Activated CD4-positive, alpha-beta T cell treated with anti-CD3 and anti-CD28 coated beads for 36 hours (primary cell): ENCODE measurements at regions of chr9 and their contacts with region 1.

Region 1: GRCh38 chr9:133030317-133031129 is at the start of gene GTF3C5:
- DNase-seq: peak; percentile 95
- ATAC-seq: peak; percentile 98
- H3K4me3 Mint-ChIP-seq: peak within 1 kb of the TSS; percentile 94
- H3K27ac Mint-ChIP-seq: peak within 1 kb of the TSS; percentile 95
- H3K4me1 Mint-ChIP-seq: peaks cover 41% of the 10 kb centered on the region
- H3K27me3 Mint-ChIP-seq: no peaks in the 10 kb centered on the region
- total RNA-seq, gene GTF3C5: 81.3 to 84.5 TPM

Region 2: GRCh38 chr9:133041958-133042357 is 11.4 kb after region 1 on chr9:
- CTCF ChIA-PET with region 1: interaction called, 13 read pairs
- POLR2A ChIA-PET with region 1: interaction called, 4 read pairs
- intact Hi-C with region 1: no loop called
- DNase-seq: no peak
- ATAC-seq: no peak
- H3K4me3 Mint-ChIP-seq: no peak overlapping the region
- H3K27ac Mint-ChIP-seq: no peak overlapping the region
- H3K4me1 Mint-ChIP-seq: peaks cover 10% of the 10 kb centered on the region
- H3K27me3 Mint-ChIP-seq: no peaks in the 10 kb centered on the region

Region 3: GRCh38 chr9:133478851-133479711 is 448.6 kb after region 1 on chr9 and contains the start of gene SLC2A6:
- CTCF ChIA-PET with region 1: no interaction called
- POLR2A ChIA-PET with region 1: no interaction called
- intact Hi-C with region 1: loop called in 1 of 2 experiments (anchors 2 kb)
- DNase-seq: peak; percentile 89
- ATAC-seq: peak; percentile 100
- H3K4me3 Mint-ChIP-seq: peak within 1 kb of the TSS; percentile 67
- H3K27ac Mint-ChIP-seq: no peak within 1 kb of the TSS
- H3K4me1 Mint-ChIP-seq: peaks cover 6% of the 10 kb centered on the region
- H3K27me3 Mint-ChIP-seq: no peaks in the 10 kb centered on the region
- total RNA-seq, gene SLC2A6: 1.6 to 1.9 TPM